ENCODE measurements at regions of chr10 and their contacts with region 1.

Region 1: DNA sequence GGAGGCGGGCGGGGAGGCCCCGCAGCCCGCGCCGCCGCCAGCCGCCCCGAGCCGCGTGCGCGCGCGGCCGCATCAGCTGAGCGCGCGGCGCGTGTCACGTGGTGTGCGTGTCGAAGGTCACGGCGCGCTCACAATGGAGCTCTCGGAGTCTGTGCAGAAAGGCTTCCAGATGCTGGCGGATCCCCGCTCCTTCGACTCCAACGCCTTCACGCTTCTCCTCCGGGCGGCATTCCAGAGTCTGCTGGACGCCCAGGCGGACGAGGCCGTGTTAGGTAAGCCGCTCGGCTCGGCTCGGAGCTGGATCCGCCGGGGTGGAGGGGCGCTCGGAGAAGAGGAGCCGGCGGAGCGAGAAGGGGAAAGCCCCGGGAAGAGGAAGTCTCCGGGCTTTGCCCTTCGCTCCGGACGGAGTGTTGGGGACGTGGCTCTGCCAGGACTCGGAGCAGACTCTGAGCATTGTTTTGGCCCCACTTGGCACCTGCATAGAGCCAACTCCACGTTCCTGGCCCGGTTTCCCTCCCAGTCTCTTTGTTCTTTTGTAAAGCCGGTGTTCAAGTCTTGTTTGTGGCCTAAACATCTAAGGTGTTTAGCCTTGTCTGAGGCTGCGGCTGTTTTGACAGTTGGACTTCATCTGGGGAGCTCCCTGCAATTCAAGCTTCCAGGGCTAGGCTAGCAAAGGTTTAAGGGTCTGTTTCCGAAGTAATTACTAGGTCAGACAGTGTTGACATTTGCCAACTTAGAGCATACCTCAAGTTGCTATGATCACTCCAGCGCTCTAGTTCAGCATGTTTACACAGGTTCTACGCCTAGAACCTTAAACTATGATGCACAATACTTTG is at the start of gene COMMD3:
- DNase-seq: peak; percentile 89
- H3K4me3 ChIP-seq: peak within 1 kb of the TSS; percentile 92
- H3K27ac ChIP-seq: peak within 1 kb of the TSS; percentile 61
- H3K4me1 ChIP-seq: peaks cover 28% of the 10 kb centered on the region
- CTCF ChIP-seq: no peak
- total RNA-seq, gene COMMD3: 24.6 and 30.1 TPM in 2 replicates

Region 2: GRCh38 chr10:22003079-22003913 is 313.2 kb before region 1 on chr10 and contains the start of gene DNAJC1:
- CTCF ChIA-PET with region 1: no interaction called
- POLR2A ChIA-PET with region 1: interaction called, 3 read pairs
- intact Hi-C with region 1: loop called (anchors 1 kb)
- DNase-seq: peak; percentile 96
- H3K4me3 ChIP-seq: peak within 1 kb of the TSS; percentile 80
- H3K27ac ChIP-seq: peak within 1 kb of the TSS; percentile 40
- H3K4me1 ChIP-seq: peaks cover 26% of the 10 kb centered on the region
- CTCF ChIP-seq: no peak
- total RNA-seq, gene DNAJC1: 12.1 and 16.9 TPM in 2 replicates

Region 3: GRCh38 chr10:22133749-22134624 is 182.5 kb before region 1 on chr10:
- CTCF ChIA-PET with region 1: no interaction called
- POLR2A ChIA-PET with region 1: no interaction called
- intact Hi-C with region 1: no loop called
- DNase-seq: peak; percentile 56
- H3K4me3 ChIP-seq: no peak overlapping the region
- H3K27ac ChIP-seq: no peak overlapping the region
- H3K4me1 ChIP-seq: no peaks in the 10 kb centered on the region
- CTCF ChIP-seq: no peak

Region 4: DNA sequence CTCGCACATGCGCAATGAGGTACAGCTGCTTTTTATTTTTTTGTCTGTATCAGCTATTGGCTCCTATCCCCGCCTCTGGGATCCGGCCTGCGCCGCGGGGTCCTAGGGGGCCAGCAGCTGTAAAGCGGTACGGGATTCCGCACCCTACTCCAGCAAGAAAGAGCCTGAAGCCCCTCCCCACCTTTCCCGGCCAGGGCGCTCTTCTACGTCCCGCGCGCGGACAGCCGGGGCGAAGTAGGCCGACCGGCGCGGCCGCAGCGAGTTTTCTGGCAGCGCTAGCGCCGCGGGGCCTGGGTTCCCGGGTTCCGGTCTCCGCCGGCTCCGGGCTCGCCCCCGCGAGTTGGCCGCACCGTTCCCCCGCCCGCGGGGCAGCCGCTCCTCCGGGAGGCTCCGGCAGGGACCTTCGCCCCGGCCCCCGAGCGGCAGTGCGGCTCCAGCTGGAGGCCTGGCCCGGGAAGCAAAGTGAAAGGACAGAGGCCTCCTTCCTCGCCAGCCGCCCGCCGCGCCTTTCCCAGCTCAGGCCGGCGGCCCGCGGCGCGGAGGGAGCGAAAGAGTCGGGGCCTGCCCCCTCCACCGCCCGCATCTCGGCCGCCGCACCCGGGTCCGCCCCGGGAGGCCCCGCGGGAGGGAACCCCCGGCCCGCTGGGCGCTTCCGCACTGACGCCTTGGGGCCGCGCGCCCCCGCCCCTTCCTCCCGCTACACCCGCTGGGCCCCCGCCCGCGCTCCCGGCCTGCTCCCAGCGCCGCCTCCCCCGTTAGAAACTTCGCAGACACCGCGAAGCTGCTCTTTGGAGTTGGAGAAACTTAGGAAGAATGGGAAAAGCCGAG is 24.1 kb after region 1 on chr10:
- CTCF ChIA-PET with region 1: no interaction called
- POLR2A ChIA-PET with region 1: interaction called, 7 read pairs
- intact Hi-C with region 1: loop called (anchors 2 kb)
- DNase-seq: peak; percentile 76
- H3K4me3 ChIP-seq: peak overlapping the region; percentile 76
- H3K27ac ChIP-seq: no peak overlapping the region
- H3K4me1 ChIP-seq: peaks cover 10% of the 10 kb centered on the region
- CTCF ChIP-seq: no peak

Region 5: DNA sequence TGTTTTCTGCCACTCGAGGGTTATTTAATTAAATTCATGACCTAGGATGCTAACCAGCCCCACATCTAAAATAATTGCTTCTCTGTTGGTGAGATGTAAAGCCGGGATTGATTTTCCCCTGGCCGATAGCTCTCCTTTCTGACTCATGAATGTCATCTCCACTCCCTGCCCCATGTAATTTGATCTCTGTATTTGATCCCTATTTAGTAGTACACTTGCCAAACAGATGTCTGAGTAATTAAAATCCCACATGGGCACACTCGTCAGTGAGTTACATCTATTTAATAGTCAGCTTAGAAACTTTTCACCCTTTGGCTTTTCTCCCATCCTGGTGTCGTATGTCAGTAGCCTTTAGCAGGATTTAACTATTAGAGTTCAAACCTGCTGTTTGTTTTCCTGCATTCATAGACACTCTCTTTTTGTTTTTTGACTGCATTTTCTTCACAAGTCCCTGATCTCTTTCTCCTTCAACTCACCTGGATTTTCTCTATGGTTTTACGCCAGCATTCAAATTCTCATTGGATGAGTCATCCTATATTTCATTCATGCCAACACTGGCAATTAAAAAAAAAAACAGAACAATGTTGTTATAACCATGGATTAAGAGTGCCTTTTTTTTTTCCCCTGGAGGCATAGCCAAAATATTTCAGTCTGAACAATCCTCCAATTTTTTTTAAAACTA is 111.5 kb after region 1 on chr10:
- CTCF ChIA-PET with region 1: no interaction called
- POLR2A ChIA-PET with region 1: no interaction called
- intact Hi-C with region 1: no loop called
- DNase-seq: no peak
- H3K4me3 ChIP-seq: no peak overlapping the region
- H3K27ac ChIP-seq: no peak overlapping the region
- H3K4me1 ChIP-seq: no peaks in the 10 kb centered on the region
- CTCF ChIP-seq: no peak

Region 6: DNA sequence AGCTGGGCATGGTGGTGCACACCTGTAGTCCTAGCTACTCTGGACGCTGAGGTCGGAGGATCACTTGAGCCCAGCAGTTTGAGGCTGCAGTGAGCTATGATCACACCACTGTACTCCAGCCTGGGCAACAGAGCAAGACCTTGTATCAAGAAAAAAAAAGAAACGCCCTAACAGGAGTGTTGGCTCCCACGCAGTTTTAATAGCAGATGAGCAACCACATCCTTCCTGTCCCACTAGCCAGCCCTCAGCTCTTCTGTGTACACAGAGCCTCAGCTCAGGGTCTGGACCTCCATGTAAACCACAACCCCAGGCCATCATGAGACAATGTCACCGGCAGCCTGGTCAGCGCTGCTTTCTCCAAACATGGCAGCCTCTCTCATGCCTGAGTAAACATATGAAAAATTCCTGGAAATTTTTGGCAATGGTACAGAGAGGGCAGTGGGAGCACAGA is 289.7 kb after region 1 on chr10:
- CTCF ChIA-PET with region 1: no interaction called
- POLR2A ChIA-PET with region 1: no interaction called
- intact Hi-C with region 1: loop called (anchors 10 kb)
- DNase-seq: peak; percentile 86
- H3K4me3 ChIP-seq: peak overlapping the region; percentile 54
- H3K27ac ChIP-seq: peak overlapping the region; percentile 67
- H3K4me1 ChIP-seq: peaks cover 66% of the 10 kb centered on the region
- CTCF ChIP-seq: no peak